Heart right ventricle (tissue), 16 donors: ENCODE measurements at regions of chr13 and their contacts with region 1.

Region 1: GRCh38 chr13:51452361-51453206 is at the start of gene INTS6:
- DNase-seq: peak; percentile 99 to 100
- ATAC-seq: peak; percentile 91 to 97 (median 96)
- H3K4me3 ChIP-seq: peak within 1 kb of the TSS; percentile 85 to 99 (median 94)
- H3K27ac ChIP-seq: peak within 1 kb of the TSS; percentile 91 to 100 (median 99)
- H3K4me1 ChIP-seq: peaks cover 2 to 47% (median 30%) of the 10 kb centered on the region in 9 donors
- H3K27me3 ChIP-seq: no peaks in the 10 kb centered on the region
- CTCF ChIP-seq: no peak
- total RNA-seq, gene INTS6: 20.2 to 31.1 (median 24.8) TPM

Region 2: DNA sequence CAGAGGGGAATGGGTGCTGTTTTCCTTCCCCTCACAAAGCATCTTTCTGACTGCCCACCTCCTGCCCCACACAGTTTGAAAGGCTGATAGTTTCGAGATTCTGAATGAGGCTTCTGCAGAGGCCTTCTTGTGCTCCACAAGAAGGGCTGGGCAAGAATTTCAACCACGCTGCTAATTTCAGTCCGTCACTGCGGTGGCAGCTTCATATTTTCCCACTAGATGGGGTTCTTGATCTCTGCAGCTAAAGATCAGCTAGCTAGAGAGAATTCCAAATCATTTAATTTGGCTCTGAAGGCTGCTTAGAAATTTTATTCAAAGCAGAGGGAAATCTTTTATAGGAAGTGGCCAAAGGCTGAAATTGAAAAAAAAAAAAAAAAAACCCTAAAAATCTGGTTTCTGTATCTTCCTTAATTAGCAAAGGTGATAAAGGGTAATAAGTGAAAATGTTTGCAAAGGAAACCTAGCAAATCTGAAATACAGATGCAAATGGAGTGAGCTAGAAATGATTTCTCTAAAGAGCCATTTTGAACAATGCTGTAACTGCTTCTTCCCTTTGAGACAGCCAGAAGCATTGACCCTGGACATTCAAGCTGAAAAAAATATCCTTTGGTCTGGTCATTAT is 303.5 kb before region 1 on chr13:
- intact Hi-C with region 1: no loop called
- DNase-seq: peak in 1 of 2 donors; percentile 21
- ATAC-seq: peak; percentile 38 to 78 (median 70)
- H3K4me3 ChIP-seq: no peak overlapping the region
- H3K27ac ChIP-seq: peak overlapping the region in 2 of 10 donors; percentile 6 to 62
- H3K4me1 ChIP-seq: peaks cover 0 to 9% (median 0%) of the 10 kb centered on the region in 9 donors
- H3K27me3 ChIP-seq: peaks cover 0 to 6% (median 0%) of the 10 kb centered on the region in 7 donors
- CTCF ChIP-seq: peak; percentile 35 to 80 (median 64)

Region 3: GRCh38 chr13:51803422-51804294 is 351.1 kb after region 1 on chr13 and contains the start of gene DHRS12:
- intact Hi-C with region 1: loop called in 6 of 10 experiments (anchors 1 to 10 kb)
- DNase-seq: peak; percentile 93 to 95
- ATAC-seq: peak; percentile 84 to 92 (median 90)
- H3K4me3 ChIP-seq: peak within 1 kb of the TSS; percentile 39 to 87 (median 64)
- H3K27ac ChIP-seq: peak within 1 kb of the TSS; percentile 97 to 100 (median 100)
- H3K4me1 ChIP-seq: peaks cover 14 to 62% (median 40%) of the 10 kb centered on the region in 9 donors
- H3K27me3 ChIP-seq: no peaks in the 10 kb centered on the region
- CTCF ChIP-seq: peak in 4 of 9 donors; percentile 10 to 32 (median 18)
- total RNA-seq, gene DHRS12: 8.6 to 14.0 (median 10.3) TPM